Activated CD8-positive, alpha-beta T cell treated with anti-CD3 and anti-CD28 coated beads for 36 hours (primary cell): ENCODE measurements at regions of chr18 and their contacts with region 1.

Region 1: GRCh38 chr18:13216092-13216582 is 2.4 kb upstream of the LDLRAD4 start:
- DNase-seq: peak; percentile 76
- ATAC-seq: peak; percentile 58
- H3K4me3 Mint-ChIP-seq: peak overlapping the region; percentile 73
- H3K27ac Mint-ChIP-seq: peak overlapping the region; percentile 85
- H3K4me1 Mint-ChIP-seq: peaks cover 29% of the 10 kb centered on the region
- H3K27me3 Mint-ChIP-seq: peaks cover 13% of the 10 kb centered on the region
- CTCF ChIP-seq: peak; percentile 78

Region 2: DNA sequence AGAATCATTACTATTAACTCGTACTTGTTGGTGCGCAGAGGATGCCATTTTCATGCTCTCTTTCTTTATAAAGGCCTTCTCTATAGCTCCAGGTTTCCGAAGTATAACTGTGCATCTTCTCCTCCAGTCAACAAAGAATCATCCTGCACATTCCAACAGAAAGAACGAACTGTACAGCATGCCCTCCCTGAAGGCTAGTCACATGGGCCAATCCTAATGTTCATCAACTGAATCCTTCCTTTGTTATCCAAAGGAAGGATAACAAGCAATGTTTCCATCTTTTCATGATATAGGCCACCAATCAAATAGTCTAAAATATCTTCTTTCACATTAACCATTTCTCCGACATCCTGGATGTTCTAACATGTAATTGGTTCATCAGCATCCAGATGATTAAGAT is 64.5 kb before region 1 on chr18:
- CTCF ChIA-PET with region 1: no interaction called
- POLR2A ChIA-PET with region 1: no interaction called
- intact Hi-C with region 1: no loop called
- DNase-seq: no peak
- ATAC-seq: no peak
- H3K4me3 Mint-ChIP-seq: no peak overlapping the region
- H3K27ac Mint-ChIP-seq: no peak overlapping the region
- H3K4me1 Mint-ChIP-seq: peaks cover 3% of the 10 kb centered on the region
- H3K27me3 Mint-ChIP-seq: peaks cover 2% of the 10 kb centered on the region
- CTCF ChIP-seq: no peak

Region 3: GRCh38 chr18:13268158-13269012 is 52.2 kb after region 1 on chr18:
- CTCF ChIA-PET with region 1: interaction called, 16 read pairs
- POLR2A ChIA-PET with region 1: interaction called, 14 read pairs
- intact Hi-C with region 1: loop called (anchors 5 kb)
- DNase-seq: no peak
- ATAC-seq: no peak
- H3K4me3 Mint-ChIP-seq: no peak overlapping the region
- H3K27ac Mint-ChIP-seq: peak overlapping the region; percentile 93
- H3K4me1 Mint-ChIP-seq: peaks cover 83% of the 10 kb centered on the region
- H3K27me3 Mint-ChIP-seq: no peaks in the 10 kb centered on the region
- CTCF ChIP-seq: no peak

Region 4: DNA sequence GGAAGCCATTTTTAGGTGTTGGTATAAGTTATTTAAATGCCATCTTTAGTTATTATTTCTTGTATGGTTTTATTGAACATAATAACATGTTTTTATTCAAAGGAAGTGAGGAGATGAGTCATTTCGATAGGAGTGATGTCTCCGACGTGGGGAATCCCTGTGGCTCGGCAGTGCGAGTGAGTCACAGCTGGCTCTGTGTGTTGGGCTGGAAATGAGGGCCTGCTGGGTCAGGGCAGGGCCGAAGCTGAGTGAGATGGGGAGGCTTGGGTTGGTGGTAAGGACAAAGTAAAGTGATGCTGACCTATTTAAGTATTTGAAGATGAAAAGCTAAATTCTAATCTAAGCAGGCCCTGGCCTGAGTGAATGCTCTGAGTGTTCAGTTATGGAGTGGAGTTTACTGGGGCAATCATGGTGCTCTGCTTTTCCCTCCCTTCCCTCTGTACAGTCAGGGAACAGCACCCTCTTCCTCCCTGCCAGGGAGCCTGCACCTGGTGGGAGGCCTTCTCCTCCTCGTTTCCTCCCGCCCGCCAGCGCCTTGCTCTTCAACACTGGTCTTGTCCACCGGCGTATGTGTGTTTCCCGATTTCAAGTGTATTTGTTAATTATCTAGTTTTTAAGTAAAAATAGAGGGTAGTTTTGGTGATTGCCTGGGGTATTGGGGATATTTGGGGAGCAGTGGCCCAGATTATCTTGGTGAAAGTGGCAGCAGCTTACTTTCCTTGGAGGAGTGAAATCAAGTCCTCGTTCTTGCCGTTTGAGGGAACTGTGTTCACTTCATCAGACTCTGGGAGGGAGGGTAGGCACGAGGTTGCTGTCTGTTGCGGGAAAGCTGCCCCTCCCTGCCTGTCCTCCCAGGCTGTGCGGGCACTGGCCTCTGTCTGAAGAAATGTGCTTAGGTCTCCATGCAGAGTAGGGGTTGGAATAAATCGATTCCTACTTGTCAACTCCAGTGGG is 159.4 kb after region 1 on chr18:
- CTCF ChIA-PET with region 1: interaction called, 13 read pairs
- POLR2A ChIA-PET with region 1: interaction called, 10 read pairs
- intact Hi-C with region 1: no loop called
- DNase-seq: peak; percentile 91
- ATAC-seq: peak; percentile 75
- H3K4me3 Mint-ChIP-seq: peak overlapping the region; percentile 56
- H3K27ac Mint-ChIP-seq: peak overlapping the region; percentile 96
- H3K4me1 Mint-ChIP-seq: peaks cover 88% of the 10 kb centered on the region
- H3K27me3 Mint-ChIP-seq: no peaks in the 10 kb centered on the region
- CTCF ChIP-seq: no peak

Region 5: GRCh38 chr18:13513021-13513420 is 296.9 kb after region 1 on chr18:
- CTCF ChIA-PET with region 1: interaction called, 11 read pairs
- POLR2A ChIA-PET with region 1: interaction called, 3 read pairs
- intact Hi-C with region 1: no loop called
- DNase-seq: peak; percentile 60
- ATAC-seq: peak; percentile 96
- H3K4me3 Mint-ChIP-seq: no peak overlapping the region
- H3K27ac Mint-ChIP-seq: no peak overlapping the region
- H3K4me1 Mint-ChIP-seq: peaks cover 38% of the 10 kb centered on the region
- H3K27me3 Mint-ChIP-seq: no peaks in the 10 kb centered on the region
- CTCF ChIP-seq: no peak

Region 6: GRCh38 chr18:13525381-13526029 is 309.4 kb after region 1 on chr18:
- CTCF ChIA-PET with region 1: interaction called, 10 read pairs
- POLR2A ChIA-PET with region 1: no interaction called
- intact Hi-C with region 1: loop called (anchors 10 kb)
- DNase-seq: no peak
- ATAC-seq: no peak
- H3K4me3 Mint-ChIP-seq: no peak overlapping the region
- H3K27ac Mint-ChIP-seq: no peak overlapping the region
- H3K4me1 Mint-ChIP-seq: peaks cover 24% of the 10 kb centered on the region
- H3K27me3 Mint-ChIP-seq: no peaks in the 10 kb centered on the region
- CTCF ChIP-seq: no peak

Region 7: DNA sequence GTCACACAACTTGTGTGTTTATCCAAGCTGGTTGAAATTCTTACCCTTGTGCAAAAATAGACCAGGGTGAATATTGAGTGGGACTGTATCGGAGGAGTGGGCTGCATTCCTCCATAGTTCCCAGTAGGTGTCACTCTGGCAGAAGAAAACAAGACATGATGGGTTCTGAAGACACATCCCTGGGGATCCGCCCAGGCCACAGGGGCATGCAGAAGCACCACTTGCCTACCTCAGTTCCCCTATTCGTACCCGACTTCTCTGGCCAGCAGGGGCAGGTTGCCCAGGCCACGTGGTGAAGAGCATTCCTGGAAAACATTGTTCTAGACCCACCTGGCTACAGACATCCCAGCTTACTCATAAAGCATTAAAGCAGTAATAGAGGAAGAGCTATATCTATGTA is 342.0 kb after region 1 on chr18:
- CTCF ChIA-PET with region 1: interaction called, 18 read pairs
- POLR2A ChIA-PET with region 1: interaction called, 5 read pairs
- intact Hi-C with region 1: no loop called
- DNase-seq: peak; percentile 57
- ATAC-seq: peak; percentile 48
- H3K4me3 Mint-ChIP-seq: no peak overlapping the region
- H3K27ac Mint-ChIP-seq: peak overlapping the region; percentile 4
- H3K4me1 Mint-ChIP-seq: peaks cover 43% of the 10 kb centered on the region
- H3K27me3 Mint-ChIP-seq: no peaks in the 10 kb centered on the region
- CTCF ChIP-seq: peak; percentile 82

Region 8: DNA sequence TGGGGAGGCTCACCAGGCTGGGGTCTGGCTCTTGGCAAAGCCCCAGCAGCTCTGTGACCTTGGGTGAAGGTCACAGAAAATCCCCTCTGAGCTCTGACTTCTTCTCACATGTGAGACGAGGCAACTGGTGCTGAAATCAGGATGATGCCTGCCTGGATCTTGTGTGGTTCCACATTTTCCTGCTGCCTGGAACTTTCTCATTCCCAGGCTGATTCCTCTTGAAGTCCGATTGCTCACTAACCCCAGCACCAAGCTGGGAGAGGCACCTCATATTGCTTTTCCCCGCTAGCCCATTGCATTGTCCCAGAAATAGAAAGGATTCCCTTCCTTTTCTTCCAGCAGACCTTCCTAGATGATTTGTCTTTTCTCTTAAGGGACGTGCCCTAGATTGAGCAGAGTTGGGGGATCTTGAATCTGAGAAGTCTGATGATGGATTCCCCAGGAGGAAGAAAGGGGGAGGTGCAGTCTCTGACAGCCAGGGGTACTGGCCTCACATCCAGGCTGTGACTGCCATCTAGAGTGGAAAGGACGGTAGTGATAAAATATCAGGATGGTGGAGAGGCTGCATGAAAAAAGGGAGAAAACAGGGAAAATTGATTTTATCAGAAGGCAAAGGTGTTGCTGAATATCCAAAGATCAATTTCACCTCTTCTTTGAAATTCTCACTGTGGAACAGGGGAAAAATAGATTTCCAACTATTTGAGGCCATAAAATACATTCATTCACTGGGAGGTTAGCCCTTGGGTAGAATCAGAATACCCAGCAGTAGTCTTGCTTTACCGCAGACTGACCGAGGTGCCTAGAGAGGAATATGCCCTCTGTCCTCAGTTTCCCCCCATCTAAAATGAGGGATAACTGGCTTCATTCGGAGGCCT is 413.9 kb after region 1 on chr18:
- CTCF ChIA-PET with region 1: interaction called, 18 read pairs
- POLR2A ChIA-PET with region 1: no interaction called
- intact Hi-C with region 1: loop called (anchors 5 kb)
- DNase-seq: peak; percentile 74
- ATAC-seq: peak; percentile 95
- H3K4me3 Mint-ChIP-seq: no peak overlapping the region
- H3K27ac Mint-ChIP-seq: peak overlapping the region; percentile 70
- H3K4me1 Mint-ChIP-seq: peaks cover 28% of the 10 kb centered on the region
- H3K27me3 Mint-ChIP-seq: no peaks in the 10 kb centered on the region
- CTCF ChIP-seq: peak; percentile 90